GM10248 (cell line): ENCODE measurements at regions of chr20 and their contacts with region 1.

Region 1: GRCh38 chr20:5191829-5192569 is 65.2 kb downstream of the CDS2 start:
- DNase-seq: peak; percentile 81
- CTCF ChIP-seq: peak; percentile 67

Region 2: DNA sequence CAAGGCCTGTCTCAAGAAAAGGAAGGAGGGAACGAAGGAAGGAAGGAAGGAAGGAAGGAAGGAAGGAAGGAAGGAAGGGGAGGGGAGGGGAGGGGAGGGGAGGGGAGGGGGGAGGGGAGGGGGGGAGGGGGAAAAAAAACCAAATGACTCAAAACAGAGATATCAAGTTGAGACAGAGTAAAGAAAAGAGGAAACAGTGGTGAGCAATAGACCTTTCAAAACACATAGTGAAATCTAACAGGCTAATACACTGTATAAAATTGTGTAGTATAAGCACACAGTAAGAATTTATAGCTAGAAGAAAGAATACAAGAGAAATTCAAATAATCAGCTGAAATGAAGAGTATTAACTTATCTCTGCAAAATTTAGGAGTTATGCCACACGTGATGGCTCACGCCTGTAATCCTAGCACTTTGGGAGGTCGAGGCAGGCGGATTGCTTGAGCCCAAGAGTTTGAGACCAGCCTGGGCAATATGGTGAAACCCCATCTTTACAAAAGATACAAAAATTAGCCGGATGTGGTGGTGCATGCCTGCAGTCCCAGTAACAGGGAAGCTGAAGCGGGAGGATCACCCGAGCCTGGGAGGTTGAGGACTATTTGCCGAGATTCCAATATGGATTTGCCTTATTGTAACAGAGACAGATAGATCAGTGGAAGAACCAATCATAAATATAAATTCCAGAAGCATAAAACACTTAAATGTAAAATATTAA is 347.1 kb before region 1 on chr20:
- CTCF ChIA-PET with region 1: no interaction called
- POLR2A ChIA-PET with region 1: no interaction called
- DNase-seq: peak; percentile 59
- CTCF ChIP-seq: no peak

Region 3: DNA sequence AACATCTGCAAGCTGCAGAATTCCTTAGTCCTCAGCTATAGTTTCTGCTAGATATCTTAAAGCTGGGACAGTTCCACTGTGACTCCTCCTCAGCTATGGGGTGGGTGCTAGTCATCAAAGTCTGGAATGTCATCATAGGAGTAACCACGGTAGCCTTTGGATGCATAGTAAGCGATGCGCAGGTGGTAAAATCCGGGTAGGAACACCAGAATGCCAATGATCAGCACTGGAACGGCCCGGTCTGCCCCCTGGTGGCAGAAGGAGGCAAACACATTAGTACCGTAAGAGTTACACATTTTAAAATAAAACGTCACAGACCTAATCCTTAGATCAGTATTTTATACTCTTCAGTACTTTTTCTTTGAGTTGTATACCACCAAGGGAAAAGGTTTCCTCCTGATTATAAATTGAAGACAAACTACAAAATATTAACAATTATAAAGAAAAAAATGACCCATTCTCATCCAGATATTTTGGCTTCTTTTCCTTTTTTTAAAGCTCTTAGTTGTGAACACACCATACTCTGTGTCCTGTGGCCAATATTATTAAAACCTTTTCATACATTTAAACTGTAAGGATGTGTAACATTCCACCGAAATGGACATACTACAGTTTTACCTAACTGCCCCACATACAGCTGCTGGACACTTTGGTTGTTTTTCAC is 91.2 kb before region 1 on chr20:
- CTCF ChIA-PET with region 1: interaction called, 21 read pairs
- POLR2A ChIA-PET with region 1: no interaction called
- DNase-seq: peak; percentile 63
- CTCF ChIP-seq: peak; percentile 84

Region 4: GRCh38 chr20:5126512-5127203 is 65.3 kb before region 1 on chr20 and contains the start of gene CDS2:
- CTCF ChIA-PET with region 1: interaction called, 183 read pairs
- POLR2A ChIA-PET with region 1: interaction called, 10 read pairs
- DNase-seq: peak; percentile 98
- CTCF ChIP-seq: peak; percentile 78

Region 5: GRCh38 chr20:5156675-5157448 is 35.1 kb before region 1 on chr20:
- CTCF ChIA-PET with region 1: interaction called, 11 read pairs
- POLR2A ChIA-PET with region 1: no interaction called
- DNase-seq: no peak
- CTCF ChIP-seq: no peak

Region 6: DNA sequence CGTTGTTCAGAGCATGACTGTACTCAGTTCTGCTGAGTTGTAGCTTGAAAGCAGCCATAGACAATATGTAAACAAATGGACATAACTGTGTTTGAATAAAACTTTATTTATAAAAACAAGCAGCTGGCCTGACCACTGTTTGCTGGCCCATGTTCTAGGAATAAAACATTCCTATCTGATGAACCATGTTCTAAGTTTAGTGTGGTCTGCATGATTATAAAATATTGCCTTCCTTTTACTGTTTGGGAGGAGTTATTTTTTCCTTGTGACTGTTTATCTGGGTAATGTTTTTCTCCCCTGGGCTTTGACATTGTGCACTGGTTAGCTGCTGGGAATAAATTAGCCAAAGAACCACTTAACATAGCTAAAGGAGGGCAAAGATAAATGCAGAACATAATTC is 10.0 kb before region 1 on chr20:
- CTCF ChIA-PET with region 1: interaction called, 55 read pairs
- POLR2A ChIA-PET with region 1: no interaction called
- DNase-seq: no peak
- CTCF ChIP-seq: no peak

Region 7: GRCh38 chr20:5215672-5216304 is 23.8 kb after region 1 on chr20:
- CTCF ChIA-PET with region 1: interaction called, 11 read pairs
- POLR2A ChIA-PET with region 1: no interaction called
- DNase-seq: no peak
- CTCF ChIP-seq: no peak